Caco-2 (cell line): ENCODE measurements at regions of chr10 and their contacts with region 1.

Region 1: DNA sequence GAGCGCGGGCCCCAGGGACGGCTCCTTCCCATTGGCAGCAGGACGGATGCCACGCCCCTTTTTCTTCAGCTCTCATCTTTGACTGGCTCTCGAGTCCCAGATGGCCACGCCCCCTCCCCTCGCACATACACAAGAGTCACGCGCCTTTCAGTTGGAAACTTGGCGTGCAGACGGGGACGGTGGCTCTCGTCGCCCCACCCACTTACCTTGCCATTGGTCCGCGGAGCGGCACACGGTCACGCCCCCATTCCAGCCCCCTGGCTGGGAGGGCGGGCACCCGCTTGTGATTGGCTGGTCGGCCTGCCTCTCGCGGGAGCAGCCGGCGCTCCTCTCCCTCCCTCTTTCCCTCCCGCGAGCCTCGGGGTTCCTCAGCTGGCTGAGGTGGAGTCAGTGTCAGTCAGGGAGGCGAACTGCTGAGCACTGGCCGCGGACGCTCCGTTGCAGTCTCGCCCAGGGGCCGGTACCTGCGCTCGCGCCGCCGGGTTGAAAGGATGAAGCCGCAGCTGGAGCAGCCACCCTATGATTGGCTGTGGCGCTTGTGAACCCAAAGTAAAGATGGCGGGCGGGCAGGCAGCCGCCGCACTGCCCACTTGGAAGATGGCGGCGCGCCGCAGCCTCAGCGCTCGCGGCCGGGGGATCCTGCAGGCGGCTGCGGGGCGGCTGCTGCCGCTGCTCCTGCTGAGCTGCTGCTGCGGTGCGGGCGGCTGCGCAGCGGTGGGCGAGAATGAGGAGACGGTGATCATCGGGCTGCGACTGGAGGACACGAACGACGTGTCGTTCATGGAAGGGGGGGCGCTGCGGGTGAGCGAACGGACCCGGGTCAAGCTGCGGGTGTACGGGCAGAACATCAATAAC is at the start of gene CNNM2:
- DNase-seq: peak; percentile 100
- H3K4me3 ChIP-seq: peak within 1 kb of the TSS; percentile 87
- H3K4me3 Mint-ChIP-seq: peak within 1 kb of the TSS; percentile 74
- H3K27ac Mint-ChIP-seq: peak within 1 kb of the TSS; percentile 91
- H3K4me1 ChIP-seq: peaks cover 5% of the 10 kb centered on the region
- H3K4me1 Mint-ChIP-seq: peaks cover 24% of the 10 kb centered on the region
- H3K27me3 ChIP-seq: no peaks in the 10 kb centered on the region
- H3K27me3 Mint-ChIP-seq: no peaks in the 10 kb centered on the region
- CTCF ChIP-seq: no peak
- total RNA-seq, gene CNNM2: 14.1 and 16.1 TPM in 2 replicates

Region 2: GRCh38 chr10:102835007-102835482 is 83.1 kb before region 1 on chr10:
- CTCF ChIA-PET with region 1: interaction called, 11 read pairs
- POLR2A ChIA-PET with region 1: no interaction called
- intact Hi-C with region 1: loop called (anchors 1 kb)
- DNase-seq: peak; percentile 82 to 84
- H3K4me3 ChIP-seq: no peak overlapping the region
- H3K4me3 Mint-ChIP-seq: no peak overlapping the region
- H3K27ac Mint-ChIP-seq: no peak overlapping the region
- H3K4me1 ChIP-seq: peaks cover 14% of the 10 kb centered on the region; the same call in 1 of the 2 replicates
- H3K4me1 Mint-ChIP-seq: peaks cover 16% of the 10 kb centered on the region
- H3K27me3 ChIP-seq: no peaks in the 10 kb centered on the region
- H3K27me3 Mint-ChIP-seq: no peaks in the 10 kb centered on the region
- CTCF ChIP-seq: peak; percentile 88 to 91

Region 3: GRCh38 chr10:102962951-102963755 is 45.0 kb after region 1 on chr10:
- CTCF ChIA-PET with region 1: interaction called, 3 read pairs
- POLR2A ChIA-PET with region 1: no interaction called
- intact Hi-C with region 1: loop called (anchors 1 kb)
- DNase-seq: peak in 1 of 2 experiments; percentile 8
- H3K4me3 ChIP-seq: no peak overlapping the region
- H3K4me3 Mint-ChIP-seq: no peak overlapping the region
- H3K27ac Mint-ChIP-seq: no peak overlapping the region
- H3K4me1 ChIP-seq: peaks cover 30% of the 10 kb centered on the region
- H3K4me1 Mint-ChIP-seq: peaks cover 20% of the 10 kb centered on the region
- H3K27me3 ChIP-seq: no peaks in the 10 kb centered on the region
- H3K27me3 Mint-ChIP-seq: no peaks in the 10 kb centered on the region
- CTCF ChIP-seq: no peak

Region 4: GRCh38 chr10:103062604-103063590 is 144.7 kb after region 1 on chr10:
- CTCF ChIA-PET with region 1: interaction called, 20 read pairs
- POLR2A ChIA-PET with region 1: no interaction called
- intact Hi-C with region 1: no loop called
- DNase-seq: no peak
- H3K4me3 ChIP-seq: no peak overlapping the region
- H3K4me3 Mint-ChIP-seq: no peak overlapping the region
- H3K27ac Mint-ChIP-seq: no peak overlapping the region
- H3K4me1 ChIP-seq: no peaks in the 10 kb centered on the region
- H3K4me1 Mint-ChIP-seq: no peaks in the 10 kb centered on the region
- H3K27me3 ChIP-seq: no peaks in the 10 kb centered on the region
- H3K27me3 Mint-ChIP-seq: no peaks in the 10 kb centered on the region
- CTCF ChIP-seq: no peak

Region 5: DNA sequence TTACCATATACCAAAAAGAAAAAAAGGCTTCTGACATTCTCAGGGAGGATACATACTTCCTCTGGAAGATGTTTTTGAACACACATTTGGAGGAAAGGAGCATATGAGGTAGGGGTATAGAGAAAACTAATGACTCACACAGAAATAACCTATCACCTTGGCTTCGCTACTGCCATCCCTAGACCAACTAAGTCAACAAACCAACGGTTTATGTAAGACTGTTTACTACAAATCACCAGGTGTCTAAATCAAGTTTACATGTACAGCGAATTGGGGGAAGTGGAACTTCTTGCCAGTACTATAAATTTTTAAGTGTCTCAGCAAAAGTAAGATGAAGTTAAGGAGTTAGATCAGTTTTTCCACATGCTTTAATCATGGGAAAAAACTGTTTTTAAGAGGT is 178.0 kb after region 1 on chr10:
- CTCF ChIA-PET with region 1: no interaction called
- POLR2A ChIA-PET with region 1: no interaction called
- intact Hi-C with region 1: no loop called
- DNase-seq: no peak
- H3K4me3 ChIP-seq: no peak overlapping the region
- H3K4me3 Mint-ChIP-seq: no peak overlapping the region
- H3K27ac Mint-ChIP-seq: no peak overlapping the region
- H3K4me1 ChIP-seq: no peaks in the 10 kb centered on the region
- H3K4me1 Mint-ChIP-seq: no peaks in the 10 kb centered on the region
- H3K27me3 ChIP-seq: no peaks in the 10 kb centered on the region
- H3K27me3 Mint-ChIP-seq: no peaks in the 10 kb centered on the region
- CTCF ChIP-seq: no peak

Region 6: DNA sequence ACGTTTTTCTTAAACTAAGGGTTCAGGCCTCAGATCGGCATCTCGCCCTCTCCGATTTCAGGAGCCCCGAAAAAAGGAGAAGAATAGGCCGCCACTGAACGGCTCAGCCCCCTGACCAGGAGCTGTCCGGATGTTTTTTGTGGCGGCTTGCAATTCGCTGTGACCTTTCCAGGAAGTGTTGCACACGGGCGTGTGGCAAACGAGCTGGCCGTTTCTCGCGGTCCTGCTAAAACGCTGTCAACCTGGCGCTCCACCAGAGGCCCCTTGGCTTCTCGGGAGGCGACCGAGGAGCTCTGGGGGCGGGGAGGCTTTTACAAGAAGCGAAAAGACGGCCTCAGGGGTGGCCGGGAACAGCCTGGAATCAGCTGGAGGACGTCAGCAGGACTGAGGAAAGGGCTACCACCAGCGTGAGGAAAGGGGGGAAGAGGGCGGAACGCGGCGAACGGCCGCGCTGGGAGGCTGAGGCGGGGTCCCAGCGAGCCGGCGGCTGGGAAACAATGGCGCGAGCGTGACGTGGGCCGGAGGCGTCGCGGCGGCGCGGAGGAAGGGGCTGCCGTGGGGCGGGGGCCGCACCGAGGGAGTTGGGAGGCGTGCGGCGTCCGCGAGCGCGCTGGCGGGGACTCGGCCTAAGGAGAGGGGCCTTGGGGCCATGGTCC is 274.4 kb after region 1 on chr10:
- CTCF ChIA-PET with region 1: interaction called, 4 read pairs
- POLR2A ChIA-PET with region 1: no interaction called
- intact Hi-C with region 1: loop called (anchors 2 kb)
- DNase-seq: peak; percentile 80 to 84
- H3K4me3 ChIP-seq: peak overlapping the region; percentile 67
- H3K4me3 Mint-ChIP-seq: peak overlapping the region; percentile 94
- H3K27ac Mint-ChIP-seq: peak overlapping the region; percentile 98
- H3K4me1 ChIP-seq: peaks cover 20% of the 10 kb centered on the region
- H3K4me1 Mint-ChIP-seq: peaks cover 20% of the 10 kb centered on the region
- H3K27me3 ChIP-seq: no peaks in the 10 kb centered on the region
- H3K27me3 Mint-ChIP-seq: no peaks in the 10 kb centered on the region
- CTCF ChIP-seq: no peak

Region 7: DNA sequence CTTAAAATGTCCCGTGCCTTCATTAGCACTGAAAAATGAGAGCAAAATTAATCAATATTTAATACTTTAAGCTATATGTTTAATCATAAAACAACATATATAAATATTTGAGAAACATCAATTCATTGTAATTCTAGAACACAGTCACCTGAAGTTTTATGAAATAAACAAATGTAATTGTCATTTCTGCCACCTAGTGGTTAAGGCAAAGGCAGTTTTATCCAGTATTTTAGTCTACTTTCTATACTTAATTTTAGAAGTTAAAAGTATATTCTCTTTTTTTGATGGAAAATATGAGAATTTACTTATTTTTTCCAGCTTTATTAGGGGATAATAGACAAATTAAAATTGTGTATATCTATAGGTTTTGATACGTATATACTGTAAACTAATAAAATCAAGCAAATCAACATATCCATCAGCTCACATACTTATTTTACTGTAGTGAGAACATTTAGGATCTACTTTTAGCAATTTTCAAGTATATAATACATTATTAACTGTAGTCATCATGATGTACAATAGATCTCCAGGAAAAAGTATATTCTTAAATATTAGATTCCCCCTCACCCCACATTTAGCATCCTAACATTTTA is 415.8 kb after region 1 on chr10:
- CTCF ChIA-PET with region 1: no interaction called
- POLR2A ChIA-PET with region 1: no interaction called
- intact Hi-C with region 1: loop called (anchors 2 kb)
- DNase-seq: no peak
- H3K4me3 ChIP-seq: no peak overlapping the region
- H3K4me3 Mint-ChIP-seq: no peak overlapping the region
- H3K27ac Mint-ChIP-seq: no peak overlapping the region
- H3K4me1 ChIP-seq: no peaks in the 10 kb centered on the region
- H3K4me1 Mint-ChIP-seq: no peaks in the 10 kb centered on the region
- H3K27me3 ChIP-seq: no peaks in the 10 kb centered on the region
- H3K27me3 Mint-ChIP-seq: no peaks in the 10 kb centered on the region
- CTCF ChIP-seq: peak; percentile 42 to 69